Naive thymus-derived CD8-positive, alpha-beta T cell (primary cell): ENCODE measurements at regions of chr11 and their contacts with region 1.

Region 1: GRCh38 chr11:62652161-62653006 is 718 bp downstream of the INTS5 start:
- DNase-seq: peak in 4 of 10 donors; percentile 34 to 57 (median 44)
- ATAC-seq: peak; percentile 6 to 49
- H3K4me3 Mint-ChIP-seq: peak overlapping the region; percentile 86 to 96 (median 92)
- H3K27ac Mint-ChIP-seq: peak overlapping the region; percentile 82 to 100 (median 94)
- H3K4me1 Mint-ChIP-seq: peaks cover 12 to 37% (median 21%) of the 10 kb centered on the region in 4 donors
- H3K27me3 Mint-ChIP-seq: no peaks in the 10 kb centered on the region

Region 2: GRCh38 chr11:62497132-62497915 is 155.1 kb before region 1 on chr11:
- POLR2A ChIA-PET with region 1: no interaction called
- DNase-seq: peak in 2 of 10 donors; percentile 8 to 9
- ATAC-seq: peak; percentile 20 to 52
- H3K4me3 Mint-ChIP-seq: no peak overlapping the region
- H3K27ac Mint-ChIP-seq: peak overlapping the region in 2 of 10 donors; percentile 3 to 14
- H3K4me1 Mint-ChIP-seq: peaks cover 0 to 11% (median 1%) of the 10 kb centered on the region in 4 donors
- H3K27me3 Mint-ChIP-seq: peaks cover under 1 to 9% (median 7%) of the 10 kb centered on the region in 5 donors

Region 3: DNA sequence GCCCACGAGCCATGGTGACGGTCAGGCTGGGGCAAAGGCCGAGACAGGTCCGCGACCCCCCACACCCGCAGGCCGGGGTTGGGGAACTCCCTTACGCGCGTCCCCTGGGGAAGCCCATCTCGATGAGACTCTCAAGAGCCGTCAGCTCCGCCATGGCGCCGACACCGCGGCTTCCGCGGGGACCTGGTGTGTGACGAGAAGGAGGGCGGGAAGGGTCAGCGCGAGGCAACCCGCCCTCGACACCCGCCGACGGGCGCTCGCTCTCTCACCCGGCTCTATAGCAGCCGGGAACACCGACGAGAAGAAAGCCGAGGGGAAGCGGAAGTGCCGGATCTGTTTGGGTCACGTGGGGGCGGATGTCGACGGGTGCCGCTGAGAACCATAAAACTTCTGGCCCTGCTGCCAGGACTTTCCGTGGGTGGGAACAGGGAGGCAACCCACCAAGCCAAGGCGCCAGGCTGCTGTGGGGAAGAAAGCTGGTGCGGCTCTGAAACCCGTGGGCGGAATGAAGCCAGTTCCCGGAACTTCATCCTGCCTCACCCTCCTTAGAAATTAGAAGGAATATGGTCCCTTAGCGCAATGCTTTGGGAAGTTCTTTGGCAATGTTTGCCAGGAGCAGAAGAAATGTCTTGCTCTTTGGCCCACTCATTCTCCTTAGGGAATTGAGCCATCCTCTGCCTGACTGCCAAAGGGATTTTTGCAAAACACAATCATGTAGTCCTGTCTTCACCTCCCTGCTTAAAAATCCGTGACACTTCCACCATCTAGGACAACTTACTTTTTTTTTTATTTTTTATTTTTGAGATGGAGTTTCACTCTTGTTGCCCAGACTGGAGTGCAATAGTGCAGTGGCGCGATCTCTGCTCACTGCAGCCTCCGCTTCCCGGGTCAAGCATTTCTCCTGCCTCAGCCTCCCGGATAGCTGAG is 26.6 kb after region 1 on chr11 and contains the start of gene UBXN1:
- POLR2A ChIA-PET with region 1: interaction called, 541 read pairs
- DNase-seq: peak; percentile 68 to 89 (median 78)
- ATAC-seq: peak; percentile 84 to 87
- H3K4me3 Mint-ChIP-seq: peak within 1 kb of the TSS; percentile 86 to 94 (median 90)
- H3K27ac Mint-ChIP-seq: peak within 1 kb of the TSS; percentile 94 to 98 (median 95)
- H3K4me1 Mint-ChIP-seq: peaks cover 19 to 42% (median 38%) of the 10 kb centered on the region in 4 donors
- H3K27me3 Mint-ChIP-seq: no peaks in the 10 kb centered on the region
- polyA plus RNA-seq, gene UBXN1: 188 to 219 (median 218) TPM